ENCODE measurements at regions of chr6 and their contacts with region 1.

Region 1: GRCh38 chr6:113122060-113122459 is 735.1 kb upstream of the MARCKS start:
- DNase-seq: peak; percentile 88
- ATAC-seq: peak; percentile 61
- H3K4me3 ChIP-seq: peak overlapping the region; percentile 2; the same call in 1 of the 2 replicates
- H3K27ac ChIP-seq: peak overlapping the region; percentile 66
- H3K4me1 ChIP-seq: peaks cover 33% of the 10 kb centered on the region
- H3K27me3 ChIP-seq: no peaks in the 10 kb centered on the region
- CTCF ChIP-seq: peak; percentile 44; the same call in 1 of the 2 replicates

Region 2: DNA sequence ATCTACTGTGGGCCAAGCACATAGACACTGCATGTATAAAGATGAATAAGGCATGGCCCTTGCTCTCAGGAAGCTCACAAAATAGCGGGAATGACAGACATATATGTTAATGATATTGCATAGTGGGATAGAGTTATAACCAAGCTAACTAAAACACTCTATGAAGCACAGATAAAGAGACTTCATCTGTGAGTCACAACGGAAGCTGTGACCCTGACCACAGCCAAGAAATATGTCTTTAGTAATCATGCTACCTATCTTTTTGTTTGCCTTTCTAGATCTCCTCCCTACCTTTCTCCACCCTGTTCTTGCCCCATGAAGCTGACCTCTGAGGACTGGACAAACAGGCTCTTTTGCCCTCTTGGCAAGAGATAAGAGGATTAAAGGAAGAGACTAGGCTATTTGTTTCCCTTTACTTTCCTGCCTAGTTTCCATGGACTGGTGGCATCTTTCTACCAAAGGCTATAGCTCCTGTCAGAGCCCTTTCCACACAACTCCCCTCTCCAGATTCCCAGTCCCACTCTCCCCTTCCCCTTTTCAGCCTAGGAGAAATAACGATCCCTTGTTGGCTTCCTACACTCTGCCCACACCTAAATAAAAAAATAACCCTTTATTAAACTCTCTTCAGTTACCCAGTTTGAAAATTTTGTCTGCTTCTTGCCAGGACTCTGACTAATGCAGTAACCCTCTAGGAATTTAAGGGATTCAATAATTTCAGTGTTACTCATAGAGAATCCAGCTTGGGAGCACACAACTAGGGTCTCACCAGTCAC is 230.2 kb after region 1 on chr6:
- CTCF ChIA-PET with region 1: no interaction called
- POLR2A ChIA-PET with region 1: no interaction called
- intact Hi-C with region 1: loop called (anchors 1 kb)
- DNase-seq: peak; percentile 87
- ATAC-seq: peak; percentile 90
- H3K4me3 ChIP-seq: 0 out of 2 replicates have a peak overlapping the region, but pooled peaks have one; percentile 23
- H3K27ac ChIP-seq: peak overlapping the region; percentile 91
- H3K4me1 ChIP-seq: peaks cover 46% of the 10 kb centered on the region
- H3K27me3 ChIP-seq: no peaks in the 10 kb centered on the region
- CTCF ChIP-seq: no peak

Region 3: DNA sequence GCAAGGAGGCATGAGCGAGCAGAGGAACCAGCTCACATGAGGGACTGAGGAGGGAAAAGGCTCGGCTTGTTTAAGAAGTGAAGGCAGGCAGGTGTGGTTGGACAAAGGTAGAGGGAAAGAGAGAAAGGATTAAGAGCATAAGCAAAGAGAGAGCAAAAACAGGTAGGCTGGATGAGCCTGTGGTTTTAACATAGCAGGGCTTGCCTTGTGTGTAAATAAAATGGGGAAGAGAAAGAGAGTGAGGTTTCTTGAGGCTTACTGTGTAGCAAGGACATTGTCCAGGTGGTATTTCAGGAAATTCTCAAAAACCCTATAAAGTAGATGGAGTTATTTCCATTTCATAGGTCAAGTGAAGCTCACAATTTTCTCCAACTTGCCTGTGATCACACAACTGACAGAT is 942.8 kb after region 1 on chr6:
- CTCF ChIA-PET with region 1: interaction called, 10 read pairs
- POLR2A ChIA-PET with region 1: no interaction called
- intact Hi-C with region 1: no loop called
- DNase-seq: no peak
- ATAC-seq: no peak
- H3K4me3 ChIP-seq: no peak overlapping the region
- H3K27ac ChIP-seq: no peak overlapping the region
- H3K4me1 ChIP-seq: no peaks in the 10 kb centered on the region
- H3K27me3 ChIP-seq: no peaks in the 10 kb centered on the region
- CTCF ChIP-seq: no peak

Measured in PC-3 (cell line).